Ascending aorta (tissue), 2 donors: ENCODE measurements at regions of chr7 and their contacts with region 1.

Region 1: GRCh38 chr7:64183126-64183742 is 23.8 kb upstream of the ZNF735 start:
- DNase-seq: no peak
- H3K4me3 ChIP-seq: no peak overlapping the region
- H3K27ac ChIP-seq: no peak overlapping the region
- H3K4me1 ChIP-seq: no peaks in the 10 kb centered on the region
- H3K27me3 ChIP-seq: peaks cover 10% of the 10 kb centered on the region
- CTCF ChIP-seq: peak; percentile 56 to 76 (median 58)

Region 2: GRCh38 chr7:64433590-64433989 is 250.4 kb after region 1 on chr7:
- intact Hi-C with region 1: no loop called
- DNase-seq: no peak
- H3K4me3 ChIP-seq: no peak overlapping the region
- H3K27ac ChIP-seq: no peak overlapping the region
- H3K4me1 ChIP-seq: no peaks in the 10 kb centered on the region
- H3K27me3 ChIP-seq: no peaks in the 10 kb centered on the region
- CTCF ChIP-seq: no peak

Region 3: DNA sequence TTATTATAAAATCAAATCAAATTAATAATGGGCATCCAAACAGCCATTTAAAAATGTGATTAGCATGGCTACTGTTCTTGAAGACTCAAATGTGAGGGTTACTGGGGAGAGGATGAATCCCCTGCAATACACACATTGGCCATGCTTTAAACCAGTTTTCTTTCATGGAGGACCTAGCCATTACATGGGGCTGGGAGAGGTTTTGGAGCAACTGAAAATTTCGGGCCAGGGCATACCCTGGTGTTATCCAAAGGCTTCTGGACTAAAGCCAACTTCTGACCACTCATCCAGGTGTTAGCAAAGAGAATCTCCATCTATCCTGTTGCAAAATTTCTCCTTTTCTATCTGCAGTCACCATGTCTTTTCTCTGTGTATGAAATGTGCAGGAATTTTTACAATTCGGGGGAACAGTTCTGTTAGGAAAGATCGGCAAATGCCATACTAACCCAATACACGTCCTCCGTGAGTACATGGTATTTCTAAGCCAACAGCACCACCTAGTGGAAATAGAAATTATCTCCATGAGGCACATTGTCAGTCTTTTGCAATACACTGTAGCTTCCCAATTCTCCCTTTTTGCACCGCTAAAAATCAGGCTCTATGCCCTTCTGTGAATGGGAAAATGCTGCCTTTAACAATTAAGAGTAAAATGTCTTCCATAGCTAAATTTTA is 435.7 kb after region 1 on chr7:
- intact Hi-C with region 1: loop called (anchors 5 kb)
- DNase-seq: no peak
- H3K4me3 ChIP-seq: no peak overlapping the region
- H3K27ac ChIP-seq: no peak overlapping the region
- H3K4me1 ChIP-seq: no peaks in the 10 kb centered on the region
- H3K27me3 ChIP-seq: no peaks in the 10 kb centered on the region
- CTCF ChIP-seq: peak; percentile 42 to 69 (median 43)